ENCODE measurements at regions of chr6 and their contacts with region 1.

Region 1: DNA sequence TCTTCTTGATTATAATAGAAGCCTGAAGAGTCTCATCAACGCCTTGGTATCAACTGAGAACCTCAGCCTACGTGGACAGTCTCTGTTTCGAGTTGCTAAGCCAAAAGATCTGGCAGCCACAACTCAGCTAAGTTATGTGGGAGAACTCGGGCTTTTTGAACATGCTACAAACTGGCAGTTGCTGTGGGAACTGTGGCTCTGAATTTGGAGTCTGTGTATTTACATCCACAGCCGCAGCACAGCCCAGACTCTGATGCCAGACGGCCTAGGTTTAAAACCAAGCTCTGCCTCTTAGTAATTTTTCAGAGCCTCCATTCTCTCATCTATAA is 35.8 kb downstream of the RIPOR2 start:
- DNase-seq: peak; percentile 70
- H3K4me3 Mint-ChIP-seq: peak overlapping the region; percentile 59
- H3K27ac Mint-ChIP-seq: peak overlapping the region; percentile 90
- H3K4me1 Mint-ChIP-seq: peaks cover 88% of the 10 kb centered on the region
- H3K27me3 Mint-ChIP-seq: no peaks in the 10 kb centered on the region

Region 2: GRCh38 chr6:24874776-24875534 is 25.0 kb before region 1 on chr6:
- CTCF ChIA-PET with region 1: no interaction called
- POLR2A ChIA-PET with region 1: no interaction called
- intact Hi-C with region 1: no loop called
- DNase-seq: no peak
- H3K4me3 Mint-ChIP-seq: no peak overlapping the region
- H3K27ac Mint-ChIP-seq: peak overlapping the region; percentile 12
- H3K4me1 Mint-ChIP-seq: peaks cover 59% of the 10 kb centered on the region
- H3K27me3 Mint-ChIP-seq: no peaks in the 10 kb centered on the region

Region 3: GRCh38 chr6:24888715-24889370 is 11.1 kb before region 1 on chr6:
- CTCF ChIA-PET with region 1: interaction called, 21 read pairs
- POLR2A ChIA-PET with region 1: interaction called, 13 read pairs
- intact Hi-C with region 1: no loop called
- DNase-seq: no peak
- H3K4me3 Mint-ChIP-seq: no peak overlapping the region
- H3K27ac Mint-ChIP-seq: peak overlapping the region; percentile 77
- H3K4me1 Mint-ChIP-seq: peaks cover 84% of the 10 kb centered on the region
- H3K27me3 Mint-ChIP-seq: no peaks in the 10 kb centered on the region

Region 4: DNA sequence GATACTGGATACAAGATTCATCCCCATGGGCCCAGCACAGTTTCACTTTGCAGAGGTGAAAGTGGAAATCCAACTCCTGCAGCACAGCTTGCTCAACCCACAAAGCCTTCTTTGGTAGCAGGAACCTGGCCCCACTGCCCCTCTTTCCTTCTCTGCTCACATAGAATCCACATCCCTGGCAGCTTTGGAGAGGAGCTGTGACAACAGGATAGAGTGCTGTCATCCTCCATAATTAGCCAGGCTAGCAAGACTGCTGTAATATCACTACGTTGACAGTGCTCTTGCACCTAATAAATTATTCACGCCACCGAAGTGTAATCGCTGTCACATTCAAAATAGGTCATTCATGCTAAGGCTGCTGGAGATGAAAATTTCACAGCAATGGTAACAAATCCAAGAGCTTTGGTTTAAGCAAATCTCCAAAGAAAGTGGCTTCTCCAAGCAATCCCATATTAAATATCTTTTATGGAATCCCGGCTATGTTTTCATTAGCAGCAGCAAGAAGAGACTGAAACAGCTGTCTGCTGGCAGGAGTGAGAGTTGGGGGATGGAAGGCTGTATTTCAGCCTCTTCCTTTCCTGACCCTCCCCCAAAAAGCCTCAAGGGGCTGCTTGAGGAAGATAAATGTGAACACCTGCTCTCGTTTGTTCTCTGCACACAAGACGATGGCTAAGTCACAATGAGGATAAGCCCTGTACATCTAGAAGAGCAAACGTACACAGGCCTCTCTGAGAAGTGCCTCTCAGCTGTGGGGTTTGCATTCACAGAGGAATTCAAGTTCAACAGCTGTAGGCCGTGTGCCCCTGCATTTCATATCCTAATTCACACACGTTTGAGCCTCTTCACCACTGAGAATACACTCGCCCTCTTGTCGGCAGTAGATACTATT is 19.3 kb after region 1 on chr6:
- CTCF ChIA-PET with region 1: interaction called, 6 read pairs
- POLR2A ChIA-PET with region 1: interaction called, 7 read pairs
- intact Hi-C with region 1: loop called (anchors 1 kb)
- DNase-seq: peak; percentile 51
- H3K4me3 Mint-ChIP-seq: peak overlapping the region; percentile 56
- H3K27ac Mint-ChIP-seq: peak overlapping the region; percentile 85
- H3K4me1 Mint-ChIP-seq: peaks cover 88% of the 10 kb centered on the region
- H3K27me3 Mint-ChIP-seq: no peaks in the 10 kb centered on the region

Measured in activated CD4-positive, alpha-beta memory T cell treated with anti-CD3 and anti-CD28 coated beads for 36 hours (primary cell).